Sciatic nerve (tissue), 2 donors: ENCODE measurements at regions of chr1 and their contacts with region 1.

Region 1: DNA sequence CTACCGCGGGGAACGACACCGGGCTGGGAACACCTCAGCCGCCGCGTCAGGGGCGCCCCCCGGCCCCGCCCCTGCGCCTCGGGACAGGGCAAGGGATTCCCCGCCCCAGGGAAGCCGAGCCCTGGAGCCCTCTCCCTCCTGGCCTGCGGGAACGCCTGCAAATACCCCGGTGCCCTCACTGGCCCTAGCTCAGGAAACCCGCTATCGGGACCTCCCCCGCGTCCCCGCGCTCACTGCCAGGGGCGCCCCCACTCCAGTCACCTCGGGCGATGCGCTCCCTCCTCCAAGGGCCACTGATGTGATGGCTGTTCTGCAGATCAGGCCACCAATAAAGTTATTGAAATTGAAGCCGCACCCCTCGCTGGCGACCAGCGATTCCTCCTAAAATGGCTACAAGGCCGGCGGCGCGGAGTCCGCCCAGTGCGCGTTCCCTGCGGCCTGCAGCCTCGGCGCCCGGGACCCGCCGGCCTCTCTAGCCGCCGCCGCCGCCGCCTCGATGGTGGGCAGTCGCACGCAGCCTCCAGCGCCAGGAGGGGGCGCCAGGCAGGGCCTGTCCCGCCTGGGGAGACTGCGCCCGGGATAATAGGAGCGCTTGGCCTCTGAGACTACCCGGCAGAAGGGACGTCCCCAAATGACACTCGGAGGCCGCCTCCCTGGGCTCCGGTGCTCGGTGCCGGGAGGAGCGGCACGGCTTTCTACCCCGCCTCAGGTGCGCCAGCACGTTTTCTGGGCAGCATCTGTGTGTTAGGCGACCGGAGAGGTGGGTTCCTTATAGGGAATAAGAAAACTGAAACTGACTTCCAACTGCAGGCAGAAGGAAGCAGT is at the start of gene PRKAB2:
- DNase-seq: peak; percentile 97
- ATAC-seq: peak; percentile 98
- total RNA-seq, gene PRKAB2: 19.0 TPM

Region 2: GRCh38 chr1:147080006-147080661 is 92.2 kb before region 1 on chr1:
- intact Hi-C with region 1: no loop called
- DNase-seq: no peak
- ATAC-seq: no peak

Region 3: GRCh38 chr1:147242439-147243227 is 70.3 kb after region 1 on chr1 and contains the start of gene CHD1L:
- intact Hi-C with region 1: loop called (anchors 5 kb)
- DNase-seq: peak; percentile 97
- ATAC-seq: peak; percentile 98
- total RNA-seq, gene CHD1L: 30.9 TPM